ENCODE measurements at regions of chr20 and their contacts with region 1.

Region 1: GRCh38 chr20:53847129-53847836 is 223.1 kb downstream of the BCAS1 start:
- DNase-seq: no peak
- CTCF ChIP-seq: no peak

Region 2: DNA sequence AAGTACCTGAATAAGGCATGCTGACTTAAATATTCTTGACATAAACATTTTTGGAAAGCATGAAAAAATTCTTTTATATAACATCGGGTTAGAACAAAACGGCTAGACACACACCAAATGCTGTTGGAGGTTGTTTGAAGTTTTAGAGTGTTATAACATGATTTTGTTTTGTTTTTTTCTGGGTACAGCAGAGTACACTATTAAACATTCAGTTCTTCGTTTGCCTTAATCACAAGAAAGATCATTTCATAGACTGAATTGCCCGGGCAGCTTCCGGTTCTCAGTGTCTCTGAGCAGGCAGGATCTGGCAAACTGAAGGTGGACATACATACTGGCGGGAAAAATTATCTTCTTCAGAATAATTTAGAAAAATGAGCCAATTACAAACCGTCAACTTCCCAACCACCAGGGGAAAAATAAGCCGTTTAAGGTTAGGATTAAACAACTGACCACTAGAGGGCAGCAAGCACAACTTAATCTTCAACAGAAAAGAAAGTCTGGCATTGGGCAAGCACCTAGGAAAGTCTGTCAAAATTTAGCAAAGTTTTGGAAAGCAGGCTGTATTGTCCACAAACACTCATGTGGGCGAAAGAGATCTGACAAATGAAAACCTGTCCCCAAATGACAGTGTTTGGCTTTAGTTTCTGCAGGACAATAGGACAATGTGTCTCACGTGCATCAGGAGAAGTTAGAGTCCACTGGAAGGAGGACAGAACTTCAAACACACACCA is 268.6 kb before region 1 on chr20:
- CTCF ChIA-PET with region 1: no interaction called
- POLR2A ChIA-PET with region 1: no interaction called
- DNase-seq: peak; percentile 72
- CTCF ChIP-seq: peak; percentile 67

Region 3: GRCh38 chr20:53738039-53738944 is 109.0 kb before region 1 on chr20:
- CTCF ChIA-PET with region 1: no interaction called
- POLR2A ChIA-PET with region 1: no interaction called
- DNase-seq: no peak
- CTCF ChIP-seq: no peak

Region 4: DNA sequence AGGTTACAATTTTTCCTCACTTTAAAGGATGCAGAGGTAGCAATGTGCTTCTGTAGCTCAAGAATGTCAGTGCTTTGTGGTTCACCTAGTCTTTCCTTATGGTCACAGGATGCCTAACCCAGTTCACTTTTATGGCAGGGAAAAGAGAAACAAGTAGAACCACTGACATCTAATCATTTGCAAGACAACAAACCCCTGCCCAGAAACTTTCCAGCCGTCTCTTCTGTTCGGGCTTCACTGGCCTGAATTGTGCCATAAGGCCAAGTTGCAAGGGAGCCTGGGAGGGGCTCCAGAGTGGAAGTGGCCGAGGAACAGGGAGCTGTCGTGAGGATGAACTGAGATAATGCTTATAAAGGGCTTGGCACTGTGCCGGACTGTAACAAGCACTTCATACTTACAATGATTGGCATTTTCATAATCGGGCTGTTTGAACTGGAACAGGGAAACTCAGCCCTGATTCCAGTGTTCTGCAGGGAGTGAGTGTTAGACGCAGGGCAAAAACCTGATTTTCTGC is 10.5 kb after region 1 on chr20:
- CTCF ChIA-PET with region 1: interaction called, 11 read pairs
- POLR2A ChIA-PET with region 1: no interaction called
- DNase-seq: no peak
- CTCF ChIP-seq: no peak

Region 5: GRCh38 chr20:53869466-53870258 is 22.4 kb after region 1 on chr20:
- CTCF ChIA-PET with region 1: interaction called, 14 read pairs
- POLR2A ChIA-PET with region 1: no interaction called
- DNase-seq: peak; percentile 52
- CTCF ChIP-seq: peak; percentile 77